ENCODE measurements at regions of chr1 and their contacts with region 1.

Region 1: DNA sequence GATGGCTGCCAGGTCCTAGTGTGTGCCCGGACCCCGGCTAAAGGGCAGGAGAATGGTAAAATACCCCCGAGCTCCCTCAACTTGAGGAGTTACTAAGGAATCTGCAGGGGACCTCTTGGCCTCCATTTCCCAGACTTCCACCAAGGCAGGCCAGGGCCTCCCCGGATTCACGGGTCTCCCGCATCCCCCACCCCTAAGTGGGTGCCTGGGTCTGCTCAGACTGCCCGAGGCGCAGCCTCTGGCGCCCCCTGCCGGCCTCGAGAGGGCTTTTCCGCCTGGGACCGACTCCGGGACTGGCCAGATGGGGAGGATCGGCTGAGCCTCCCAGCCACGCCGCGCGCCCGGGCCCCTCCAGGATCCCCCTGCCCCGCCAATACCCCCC is 1.7 kb downstream of the PLEKHG5 start:
- DNase-seq: peak; percentile 88

Region 2: GRCh38 chr1:6523566-6523965 is 33.8 kb after region 1 on chr1:
- intact Hi-C with region 1: loop called (anchors 2 kb)
- DNase-seq: no peak

Region 3: GRCh38 chr1:6646499-6647148 is 156.8 kb after region 1 on chr1:
- intact Hi-C with region 1: loop called (anchors 5 kb)
- DNase-seq: no peak